Heart left ventricle (tissue), 16 donors: ENCODE measurements at regions of chr1 and their contacts with region 1.

Region 1: DNA sequence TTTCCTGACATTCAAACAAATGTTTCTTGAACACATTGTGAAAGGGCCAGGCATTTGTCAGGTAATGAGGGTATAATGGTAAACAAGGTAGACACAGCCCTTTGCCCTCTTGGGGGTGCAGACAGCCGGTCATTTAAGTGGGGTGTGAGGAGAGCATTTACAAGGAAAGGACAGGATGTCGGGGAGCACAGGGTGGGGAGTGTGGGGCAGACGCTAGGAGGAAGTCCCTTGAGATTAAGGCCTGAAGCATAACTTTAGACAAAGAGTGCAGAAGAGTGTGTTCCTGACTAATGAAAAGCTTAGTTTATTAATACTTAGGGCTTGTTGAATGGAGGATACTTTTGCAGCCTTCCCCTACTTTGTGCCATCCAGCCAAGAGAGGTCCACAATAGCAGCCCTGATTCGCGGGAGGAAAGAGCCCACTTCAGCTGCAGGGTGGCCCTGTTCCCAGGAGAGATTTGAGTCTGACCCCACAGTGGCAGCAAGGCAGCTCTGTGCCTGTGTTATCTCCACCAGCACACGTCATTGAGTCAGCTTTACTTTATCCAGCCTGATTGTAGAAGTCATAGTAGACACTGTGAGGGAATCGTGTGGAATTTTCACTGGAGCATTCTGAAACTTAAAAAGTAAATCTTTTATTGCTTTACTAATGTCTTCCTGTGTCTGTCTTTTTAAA is 35.1 kb downstream of the MPZL1 start:
- DNase-seq: peak in 4 of 5 donors; percentile 44 to 74 (median 59)
- ATAC-seq: peak; percentile 86 to 98 (median 92)
- H3K4me3 ChIP-seq: no peak overlapping the region
- H3K27ac ChIP-seq: peak overlapping the region in 7 of 12 donors; percentile 11 to 52 (median 18)
- H3K4me1 ChIP-seq: peaks cover 5 to 62% (median 38%) of the 10 kb centered on the region in 12 donors
- H3K27me3 ChIP-seq: no peaks in the 10 kb centered on the region
- CTCF ChIP-seq: no peak
- POLR2A ChIP-seq: no peak

Region 2: GRCh38 chr1:167420510-167420909 is 336.4 kb before region 1 on chr1:
- intact Hi-C with region 1: no loop called
- DNase-seq: no peak
- ATAC-seq: no peak
- H3K4me3 ChIP-seq: no peak overlapping the region
- H3K27ac ChIP-seq: no peak overlapping the region
- H3K4me1 ChIP-seq: no peaks in the 10 kb centered on the region
- H3K27me3 ChIP-seq: no peaks in the 10 kb centered on the region
- CTCF ChIP-seq: no peak
- POLR2A ChIP-seq: no peak

Region 3: GRCh38 chr1:167728818-167729410 is 28.0 kb before region 1 on chr1:
- intact Hi-C with region 1: no loop called
- DNase-seq: no peak
- ATAC-seq: no peak
- H3K4me3 ChIP-seq: no peak overlapping the region
- H3K27ac ChIP-seq: no peak overlapping the region
- H3K4me1 ChIP-seq: peaks cover 0 to 46% (median 20%) of the 10 kb centered on the region in 12 donors
- H3K27me3 ChIP-seq: no peaks in the 10 kb centered on the region
- CTCF ChIP-seq: no peak
- POLR2A ChIP-seq: no peak

Region 4: DNA sequence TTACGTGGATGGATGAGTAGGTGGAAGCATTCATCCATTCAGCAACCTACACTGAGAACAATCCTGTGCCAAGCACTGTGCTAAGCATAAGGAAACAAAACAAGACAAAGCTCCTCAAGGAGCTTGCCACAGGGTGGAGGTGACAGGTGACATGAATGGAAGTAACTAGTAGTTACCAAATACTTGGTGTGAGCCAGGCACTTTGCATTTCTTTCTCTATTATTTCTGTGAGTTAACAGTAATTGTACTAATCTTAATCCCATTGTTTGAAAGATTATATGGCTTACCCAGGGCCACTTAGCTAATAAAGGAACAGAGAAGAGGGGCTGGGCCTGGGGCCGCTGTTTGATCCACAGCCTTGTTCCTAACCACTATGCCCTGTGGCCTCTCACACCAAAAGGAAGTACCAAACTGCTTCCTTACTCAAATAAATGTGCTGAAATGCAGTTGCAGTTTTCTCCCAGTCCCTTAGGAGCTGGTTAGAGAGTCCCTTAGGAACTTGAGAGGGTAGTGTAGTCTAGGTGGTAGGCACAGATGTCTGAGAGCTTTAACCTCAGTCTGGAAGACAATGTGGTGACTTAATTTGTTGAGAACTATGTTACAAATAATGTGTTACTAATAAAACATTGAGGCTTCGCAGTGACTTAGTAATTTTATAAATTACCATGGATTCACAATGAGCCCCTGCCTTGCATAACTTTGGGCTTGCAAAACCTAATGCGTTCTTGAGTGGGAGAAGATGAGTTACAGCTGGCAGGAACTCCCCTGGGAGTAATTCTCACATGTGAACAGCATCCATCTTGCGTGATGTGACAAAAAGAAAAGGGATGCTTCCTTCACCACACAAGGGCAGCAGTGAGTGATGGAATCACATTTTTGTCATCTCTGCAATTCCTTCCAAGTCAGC is 34.7 kb after region 1 on chr1:
- intact Hi-C with region 1: loop called in 2 of 10 experiments (anchors 5 kb)
- DNase-seq: peak in 4 of 5 donors; percentile 33 to 59 (median 44)
- ATAC-seq: peak; percentile 33 to 79 (median 57)
- H3K4me3 ChIP-seq: no peak overlapping the region
- H3K27ac ChIP-seq: peak overlapping the region in 9 of 12 donors; percentile 7 to 60 (median 40)
- H3K4me1 ChIP-seq: peaks cover 0 to 31% (median 15%) of the 10 kb centered on the region in 12 donors
- H3K27me3 ChIP-seq: no peaks in the 10 kb centered on the region
- CTCF ChIP-seq: peak in 1 of 12 donors; percentile 3
- POLR2A ChIP-seq: no peak